ENCODE measurements at regions of chr18 and their contacts with region 1.

Region 1: GRCh38 chr18:22983175-22983574 is 50.0 kb downstream of the RBBP8 start:
- DNase-seq: no peak
- H3K4me3 ChIP-seq: no peak overlapping the region
- H3K27ac ChIP-seq: no peak overlapping the region
- H3K4me1 ChIP-seq: peaks cover 0 to 10% (median under 1%) of the 10 kb centered on the region in 6 donors
- H3K27me3 ChIP-seq: no peaks in the 10 kb centered on the region
- CTCF ChIP-seq: peak in 10 of 11 experiments; percentile 17 to 59 (median 48)
- POLR2A ChIP-seq: no peak

Region 2: GRCh38 chr18:22800551-22800951 is 182.6 kb before region 1 on chr18:
- intact Hi-C with region 1: loop called (anchors 10 kb)
- DNase-seq: no peak
- H3K4me3 ChIP-seq: no peak overlapping the region
- H3K27ac ChIP-seq: no peak overlapping the region
- H3K4me1 ChIP-seq: peaks cover 0 to 13% (median 0%) of the 10 kb centered on the region in 6 donors
- H3K27me3 ChIP-seq: no peaks in the 10 kb centered on the region
- CTCF ChIP-seq: no peak
- POLR2A ChIP-seq: no peak

Region 3: DNA sequence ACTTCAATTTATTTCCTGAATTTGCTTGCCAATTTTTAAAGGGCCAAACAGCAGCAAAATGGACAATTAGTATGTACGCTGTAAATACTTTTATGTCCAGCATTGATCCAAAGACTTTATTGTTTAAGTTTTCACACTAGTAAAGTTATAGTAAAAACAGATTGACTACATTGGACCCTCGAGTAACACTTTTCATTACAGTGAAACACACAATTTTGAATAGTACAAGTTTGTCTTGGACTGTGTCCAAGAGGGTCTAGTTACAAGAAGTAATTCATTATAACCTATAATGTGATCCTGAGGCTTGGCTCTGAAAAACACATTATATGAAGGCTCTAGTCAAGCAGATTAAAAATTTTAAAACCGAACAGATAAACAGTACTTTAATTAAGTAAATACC is 61.4 kb before region 1 on chr18:
- intact Hi-C with region 1: loop called (anchors 10 kb)
- DNase-seq: no peak
- H3K4me3 ChIP-seq: no peak overlapping the region
- H3K27ac ChIP-seq: no peak overlapping the region
- H3K4me1 ChIP-seq: no peaks in the 10 kb centered on the region
- H3K27me3 ChIP-seq: no peaks in the 10 kb centered on the region
- CTCF ChIP-seq: no peak
- POLR2A ChIP-seq: no peak